Activated T-helper 2 cell treated with anti-CD3 and anti-CD28 coated beads, Interferon-gamma antibody, Interleukin-2, Interleukin-4, amounts not matched to agents 10 μg/mL and 5 μg/mL and 100 μg/mL, durations not matched to agents 14 hours and 24 hours and 36 hours (primary cell): ENCODE measurements at regions of chr16 and their contacts with region 1.

Region 1: GRCh38 chr16:4529085-4530060 is 9.2 kb downstream of the CDIP1 start:
- DNase-seq: no peak
- H3K4me3 Mint-ChIP-seq: peak overlapping the region; percentile 49
- H3K27ac Mint-ChIP-seq: peak overlapping the region; percentile 73
- H3K4me1 Mint-ChIP-seq: peaks cover 24% of the 10 kb centered on the region
- H3K27me3 Mint-ChIP-seq: no peaks in the 10 kb centered on the region

Region 2: DNA sequence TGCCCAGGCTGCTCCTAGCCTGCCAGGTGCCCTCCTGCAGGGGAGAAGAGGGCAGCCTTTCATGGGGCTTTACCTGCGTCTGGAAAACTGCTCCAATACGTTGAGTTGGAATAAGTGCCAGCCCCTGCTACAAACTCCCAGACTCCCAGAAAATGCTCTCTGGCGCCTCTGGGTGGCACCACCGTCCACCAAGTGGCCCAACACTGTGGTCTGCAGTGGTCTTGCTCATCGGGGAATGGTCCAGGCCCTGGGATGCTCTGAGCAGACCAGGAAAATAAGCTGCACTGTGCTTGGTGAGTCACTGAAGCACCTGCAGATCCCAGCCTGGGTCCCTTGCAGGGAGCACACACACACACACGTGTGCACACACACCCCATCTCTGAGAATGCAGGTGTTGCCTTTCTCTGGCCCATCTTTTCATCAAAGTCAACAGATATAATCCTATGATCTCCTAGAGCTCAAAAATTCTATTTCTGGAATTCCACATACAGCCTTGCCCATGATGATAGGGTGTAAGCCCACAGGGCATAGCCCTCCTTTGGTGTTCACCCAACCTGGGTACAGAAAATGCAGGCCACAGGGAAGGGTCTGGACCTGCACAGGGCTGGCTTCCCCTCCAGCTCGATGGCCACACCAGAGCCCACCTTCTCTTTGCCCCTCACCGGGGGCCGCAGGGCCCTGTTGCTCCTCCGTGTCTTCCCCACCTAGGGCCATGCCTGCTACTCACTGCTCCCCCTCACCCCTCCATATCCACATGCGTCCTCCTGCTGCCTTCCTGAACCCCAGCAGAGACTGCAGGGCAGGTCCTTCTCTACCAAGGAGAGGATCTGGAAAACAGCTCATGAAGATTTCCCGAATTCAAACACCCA is 11.3 kb before region 1 on chr16:
- intact Hi-C with region 1: loop called (anchors 2 kb)
- DNase-seq: no peak
- H3K4me3 Mint-ChIP-seq: no peak overlapping the region
- H3K27ac Mint-ChIP-seq: no peak overlapping the region
- H3K4me1 Mint-ChIP-seq: peaks cover 30% of the 10 kb centered on the region
- H3K27me3 Mint-ChIP-seq: no peaks in the 10 kb centered on the region